ENCODE measurements at regions of chr22 and their contacts with region 1.

Region 1: GRCh38 chr22:36856121-36856791 is 4.5 kb upstream of the NCF4 start:
- DNase-seq: peak; percentile 71
- H3K4me3 ChIP-seq: no peak overlapping the region
- H3K27ac ChIP-seq: no peak overlapping the region
- H3K4me1 ChIP-seq: peaks cover 8% of the 10 kb centered on the region
- H3K27me3 ChIP-seq: no peaks in the 10 kb centered on the region
- CTCF ChIP-seq: peak; percentile 99 to 100

Region 2: DNA sequence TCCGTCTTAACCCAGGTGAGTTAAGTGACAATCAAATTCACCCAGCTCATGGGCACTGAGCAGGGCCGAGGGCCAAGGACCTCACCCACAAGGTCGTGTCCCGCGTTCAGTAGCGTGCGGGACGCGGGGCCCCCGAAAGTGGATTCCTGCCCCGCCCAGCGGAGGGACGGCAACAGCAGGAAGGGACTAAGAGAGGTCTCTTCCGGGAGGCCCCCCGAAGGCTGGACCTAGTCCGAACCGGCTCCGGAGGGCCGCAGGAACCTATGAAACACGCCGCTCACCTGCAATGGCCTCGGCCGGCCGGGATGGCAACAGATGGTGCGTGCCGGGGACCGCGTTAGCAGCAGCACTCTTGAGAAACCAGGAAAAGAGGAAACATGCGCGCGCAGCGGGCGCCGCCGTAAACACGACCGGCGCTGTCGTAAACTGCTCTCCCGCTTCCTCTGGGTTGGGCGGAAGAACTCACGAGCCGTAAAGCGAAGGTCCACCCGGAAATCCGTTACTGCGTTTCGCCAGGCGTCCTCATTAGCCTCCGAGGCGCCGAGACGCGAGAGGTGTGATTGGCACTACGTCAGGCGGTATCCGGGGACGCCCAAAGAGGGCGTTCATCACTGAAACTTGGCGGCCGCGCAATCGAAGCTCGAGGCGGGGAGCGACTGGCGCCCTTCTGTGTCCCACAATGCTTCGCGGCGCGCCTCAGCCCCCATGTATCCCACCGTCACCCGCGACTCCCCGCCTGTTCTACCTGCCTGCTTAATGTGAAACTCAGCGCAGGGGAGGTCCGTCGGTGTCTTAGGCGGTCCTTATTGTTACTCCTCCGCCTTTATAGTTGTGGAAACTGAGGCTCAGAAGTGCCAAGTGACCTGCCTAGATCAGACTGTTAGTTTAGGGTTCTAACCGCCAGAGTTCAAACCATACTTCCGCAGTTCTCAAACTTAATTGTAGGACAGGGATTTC is 327.2 kb before region 1 on chr22 and contains the start of gene EIF3D:
- CTCF ChIA-PET with region 1: interaction called, 10 read pairs
- dilution Hi-C with region 1: no loop called
- in situ Hi-C with region 1: no loop called
- intact Hi-C with region 1: no loop called
- DNase-seq: peak; percentile 100
- H3K4me3 ChIP-seq: peak within 1 kb of the TSS; percentile 85 to 90 (median 86)
- H3K27ac ChIP-seq: peak within 1 kb of the TSS; percentile 97
- H3K4me1 ChIP-seq: peaks cover 19% of the 10 kb centered on the region
- H3K27me3 ChIP-seq: no peaks in the 10 kb centered on the region
- CTCF ChIP-seq: peak in 1 of 2 donors; percentile 0
- total RNA-seq, gene EIF3D: 210 to 354 TPM

Region 3: GRCh38 chr22:36781656-36782627 is 74.3 kb before region 1 on chr22:
- CTCF ChIA-PET with region 1: interaction called, 4 read pairs
- dilution Hi-C with region 1: no loop called
- in situ Hi-C with region 1: no loop called
- intact Hi-C with region 1: loop called (anchors 1 kb)
- DNase-seq: peak; percentile 77
- H3K4me3 ChIP-seq: no peak overlapping the region
- H3K27ac ChIP-seq: no peak overlapping the region
- H3K4me1 ChIP-seq: peaks cover 4% of the 10 kb centered on the region
- H3K27me3 ChIP-seq: no peaks in the 10 kb centered on the region
- CTCF ChIP-seq: peak; percentile 86 to 87

Region 4: DNA sequence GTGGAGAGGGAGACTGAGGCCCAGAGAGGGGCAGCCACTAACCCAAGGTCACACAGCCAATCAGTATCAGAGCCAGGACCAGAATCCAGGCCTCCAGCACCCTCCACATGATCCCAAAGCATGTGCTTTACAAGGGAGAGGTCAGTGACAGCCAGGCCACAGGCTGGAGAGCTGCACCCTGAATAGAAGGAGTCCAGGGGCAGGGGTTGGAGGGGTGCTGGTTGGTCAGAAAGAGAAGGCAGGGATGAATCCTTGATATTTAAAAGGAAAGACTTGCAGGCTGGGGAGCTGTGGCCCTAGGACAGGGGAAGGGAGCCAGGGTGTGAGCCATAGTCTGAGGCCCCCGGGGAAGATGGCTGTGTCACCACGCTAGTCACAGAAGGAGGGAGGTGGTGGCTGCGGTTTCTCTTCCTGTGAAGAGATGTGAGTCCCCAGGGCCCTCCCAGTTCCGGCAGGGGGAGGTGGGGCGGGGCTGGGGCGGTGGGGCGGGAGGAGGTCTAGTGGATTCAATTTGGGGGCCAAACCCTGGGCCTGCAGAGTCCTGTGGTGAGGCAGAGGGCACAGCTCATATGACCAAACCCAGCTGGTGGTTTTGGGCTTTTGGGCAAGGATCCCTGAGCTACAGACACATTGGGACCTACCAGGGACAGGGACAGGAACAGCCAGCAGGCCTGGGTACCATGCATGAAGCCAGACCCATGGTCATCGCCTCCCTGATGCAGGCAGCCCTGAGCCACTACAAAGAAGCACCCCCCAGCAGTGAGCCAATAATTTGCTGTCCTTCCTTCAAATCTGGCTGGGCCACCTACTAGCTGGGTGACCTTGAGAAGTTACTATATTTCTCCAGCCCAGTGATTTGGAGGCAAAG is 373.8 kb after region 1 on chr22:
- CTCF ChIA-PET with region 1: no interaction called
- dilution Hi-C with region 1: no loop called
- in situ Hi-C with region 1: no loop called
- intact Hi-C with region 1: no loop called
- DNase-seq: peak; percentile 55
- H3K4me3 ChIP-seq: no peak overlapping the region
- H3K27ac ChIP-seq: peak overlapping the region; percentile 53
- H3K4me1 ChIP-seq: peaks cover 44% of the 10 kb centered on the region
- H3K27me3 ChIP-seq: no peaks in the 10 kb centered on the region
- CTCF ChIP-seq: no peak